ENCODE measurements at regions of chr3 and their contacts with region 1.

Region 1: GRCh38 chr3:124905849-124906248 is 18.7 kb upstream of the ITGB5 start:
- DNase-seq: no peak
- H3K4me3 ChIP-seq: no peak overlapping the region
- H3K27ac ChIP-seq: no peak overlapping the region
- H3K4me1 ChIP-seq: no peaks in the 10 kb centered on the region
- H3K27me3 ChIP-seq: no peaks in the 10 kb centered on the region
- CTCF ChIP-seq: no peak
- POLR2A ChIP-seq: no peak

Region 2: GRCh38 chr3:124761250-124761796 is 144.5 kb before region 1 on chr3:
- intact Hi-C with region 1: loop called (anchors 1 kb)
- DNase-seq: peak; percentile 84
- H3K4me3 ChIP-seq: no peak overlapping the region
- H3K27ac ChIP-seq: peak overlapping the region; percentile 55 to 62
- H3K4me1 ChIP-seq: peaks cover 7% of the 10 kb centered on the region
- H3K27me3 ChIP-seq: no peaks in the 10 kb centered on the region
- CTCF ChIP-seq: peak; percentile 89 to 97 (median 94)
- POLR2A ChIP-seq: no peak

Region 3: DNA sequence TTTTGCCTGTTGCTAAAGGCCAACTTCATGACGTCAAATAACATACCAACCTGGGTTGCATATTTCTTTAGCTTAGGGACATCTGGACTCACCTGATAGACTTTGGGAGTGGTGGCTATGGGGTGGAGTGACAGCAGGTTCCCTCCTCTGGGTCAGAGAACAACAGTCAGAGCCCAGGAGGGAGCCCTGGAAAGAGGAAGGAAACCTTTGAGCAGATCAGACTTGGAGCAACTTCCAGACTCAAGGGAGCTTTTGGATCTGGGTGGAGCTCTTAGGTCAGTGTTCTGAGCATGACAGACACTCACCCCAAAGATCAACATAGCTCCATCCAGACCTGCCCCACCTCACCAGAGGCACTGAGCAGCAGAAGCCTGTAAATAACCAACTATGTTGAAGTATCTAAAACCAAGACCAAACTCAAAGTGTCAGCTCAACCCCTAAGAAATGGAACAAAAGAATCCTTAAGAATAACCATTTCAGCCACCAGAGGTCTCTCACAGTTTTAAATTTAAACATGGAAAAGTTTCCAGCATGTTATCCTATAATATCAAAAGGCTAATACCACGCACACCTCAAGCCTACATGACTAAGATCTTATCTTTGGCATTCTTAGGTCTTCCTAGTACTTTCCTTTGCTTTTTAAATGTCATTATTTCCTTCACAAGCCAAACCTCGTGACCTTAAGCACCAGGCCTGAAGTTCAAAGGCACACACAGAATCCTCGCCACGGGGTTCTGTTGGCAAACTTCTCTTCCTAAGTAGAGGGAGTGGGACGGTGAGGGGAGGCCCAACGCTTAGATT is 119.2 kb before region 1 on chr3:
- intact Hi-C with region 1: loop called (anchors 2 kb)
- DNase-seq: no peak
- H3K4me3 ChIP-seq: no peak overlapping the region
- H3K27ac ChIP-seq: peak overlapping the region; percentile 29 to 50
- H3K4me1 ChIP-seq: peaks cover 1% of the 10 kb centered on the region
- H3K27me3 ChIP-seq: no peaks in the 10 kb centered on the region
- CTCF ChIP-seq: peak; percentile 24 to 78 (median 63)
- POLR2A ChIP-seq: no peak